Naive thymus-derived CD4-positive, alpha-beta T cell (primary cell): ENCODE measurements at regions of chr18 and their contacts with region 1.

Region 1: GRCh38 chr18:59907172-59907571 is 7.4 kb downstream of the PMAIP1 start:
- DNase-seq: no peak
- ATAC-seq: no peak
- H3K4me3 ChIP-seq: no peak overlapping the region
- H3K4me3 Mint-ChIP-seq: peak overlapping the region in 2 of 10 donors; percentile 4 to 66
- H3K27ac ChIP-seq: no peak overlapping the region
- H3K27ac Mint-ChIP-seq: peak overlapping the region in 5 of 9 donors; percentile 23 to 74 (median 60)
- H3K4me1 ChIP-seq: peaks cover 15% of the 10 kb centered on the region in 2 donors
- H3K4me1 Mint-ChIP-seq: peaks cover 28 to 57% (median 47%) of the 10 kb centered on the region in 7 donors
- H3K27me3 ChIP-seq: no peaks in the 10 kb centered on the region
- H3K27me3 Mint-ChIP-seq: no peaks in the 10 kb centered on the region

Region 2: DNA sequence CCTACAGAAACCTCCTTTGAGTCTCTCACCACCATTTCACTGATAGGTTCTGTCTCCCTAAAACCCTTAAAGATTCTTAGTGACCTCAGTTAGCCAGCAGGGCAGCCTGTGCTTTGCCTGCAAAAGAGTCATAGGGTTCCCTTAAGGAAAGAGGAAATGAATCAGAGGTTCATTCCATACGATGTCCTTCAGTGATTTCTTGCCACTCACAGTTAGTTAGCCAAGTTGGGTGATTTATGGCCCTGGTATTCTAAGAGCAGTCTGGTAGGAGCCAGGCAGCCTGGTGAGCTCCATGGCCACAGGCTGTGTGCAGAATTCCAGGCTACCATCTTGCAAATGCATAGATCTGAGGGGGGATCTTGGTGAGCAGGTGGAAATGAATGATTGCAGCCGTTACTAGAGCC is 191.2 kb before region 1 on chr18:
- CTCF ChIA-PET with region 1: no interaction called
- POLR2A ChIA-PET with region 1: no interaction called
- intact Hi-C with region 1: no loop called
- DNase-seq: no peak
- ATAC-seq: no peak
- H3K4me3 ChIP-seq: no peak overlapping the region
- H3K4me3 Mint-ChIP-seq: no peak overlapping the region
- H3K27ac ChIP-seq: no peak overlapping the region
- H3K27ac Mint-ChIP-seq: peak overlapping the region in 1 of 9 donors; percentile 49
- H3K4me1 ChIP-seq: no peaks in the 10 kb centered on the region
- H3K4me1 Mint-ChIP-seq: no peaks in the 10 kb centered on the region
- H3K27me3 ChIP-seq: no peaks in the 10 kb centered on the region
- H3K27me3 Mint-ChIP-seq: peaks cover 0 to 8% (median 4%) of the 10 kb centered on the region in 5 donors

Region 3: DNA sequence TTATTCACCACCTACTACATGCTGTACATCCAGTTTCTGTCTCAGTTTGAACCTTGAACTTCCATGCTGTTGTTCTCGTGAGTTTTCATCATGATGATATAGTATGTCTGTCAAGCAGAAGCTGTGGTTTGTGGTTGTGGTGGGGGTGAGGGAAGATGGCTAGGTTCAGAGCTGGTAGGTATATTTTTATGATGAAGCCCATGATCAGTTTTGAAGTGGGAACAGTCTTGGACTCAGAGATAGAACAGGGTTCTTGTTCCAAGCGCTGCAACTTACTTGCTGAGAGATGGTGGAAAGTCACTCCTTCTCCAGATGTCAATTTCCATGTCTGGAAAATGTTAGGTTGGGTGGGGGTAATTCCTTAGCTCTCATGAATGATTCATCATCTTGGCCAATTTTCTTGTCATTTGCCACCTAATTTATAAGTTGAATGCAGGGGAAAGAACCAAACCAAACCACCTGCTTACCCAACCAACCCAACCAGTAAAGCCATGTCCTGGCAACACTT is 14.3 kb after region 1 on chr18:
- CTCF ChIA-PET with region 1: no interaction called
- POLR2A ChIA-PET with region 1: interaction called, 3 read pairs
- intact Hi-C with region 1: loop called in 1 of 2 experiments (anchors 1 kb)
- DNase-seq: peak in 1 of 9 donors; percentile 49
- ATAC-seq: peak; percentile 67
- H3K4me3 ChIP-seq: no peak overlapping the region
- H3K4me3 Mint-ChIP-seq: peak overlapping the region in 1 of 10 donors; percentile 67
- H3K27ac ChIP-seq: no peak overlapping the region
- H3K27ac Mint-ChIP-seq: peak overlapping the region in 2 of 9 donors; percentile 10 to 84
- H3K4me1 ChIP-seq: no peaks in the 10 kb centered on the region
- H3K4me1 Mint-ChIP-seq: peaks cover 4 to 46% (median 16%) of the 10 kb centered on the region in 7 donors
- H3K27me3 ChIP-seq: no peaks in the 10 kb centered on the region
- H3K27me3 Mint-ChIP-seq: peaks cover 0 to 8% (median 5%) of the 10 kb centered on the region in 5 donors

Region 4: DNA sequence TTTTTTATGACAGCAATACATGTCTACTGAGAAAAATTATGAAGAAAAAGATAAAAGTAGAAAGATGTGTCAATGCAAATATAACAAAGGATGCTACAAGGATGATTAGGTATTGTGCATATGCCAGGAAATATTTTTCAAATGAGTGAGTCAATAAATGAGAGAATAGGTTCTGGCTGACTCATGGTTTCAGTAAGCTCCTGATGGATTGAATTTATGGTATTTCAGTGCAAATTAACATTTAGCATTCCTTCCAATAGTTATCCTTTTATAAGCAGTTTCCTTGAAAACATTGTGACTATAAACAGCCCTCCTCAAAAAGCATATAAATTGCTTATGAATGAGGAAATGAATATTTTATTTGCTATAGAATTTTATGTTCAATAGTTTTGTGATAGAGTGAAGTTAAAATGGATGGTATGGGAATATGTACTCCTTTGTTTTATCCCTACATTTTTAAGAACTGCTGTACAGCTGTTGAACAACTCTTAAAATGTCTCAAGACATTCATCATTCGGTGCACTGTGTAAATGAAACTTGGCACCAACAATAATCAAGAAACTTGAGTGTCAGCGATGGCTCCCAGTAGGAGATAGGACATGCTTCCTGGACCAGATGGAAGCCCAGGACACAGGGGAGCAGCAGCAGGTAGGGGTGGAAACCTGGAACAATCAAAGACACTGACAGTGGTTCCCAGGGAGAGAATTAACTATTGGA is 137.3 kb after region 1 on chr18:
- CTCF ChIA-PET with region 1: no interaction called
- POLR2A ChIA-PET with region 1: no interaction called
- intact Hi-C with region 1: no loop called
- DNase-seq: no peak
- ATAC-seq: no peak
- H3K4me3 ChIP-seq: no peak overlapping the region
- H3K4me3 Mint-ChIP-seq: no peak overlapping the region
- H3K27ac ChIP-seq: no peak overlapping the region
- H3K27ac Mint-ChIP-seq: peak overlapping the region in 1 of 9 donors; percentile 33
- H3K4me1 ChIP-seq: no peaks in the 10 kb centered on the region
- H3K4me1 Mint-ChIP-seq: no peaks in the 10 kb centered on the region
- H3K27me3 ChIP-seq: no peaks in the 10 kb centered on the region
- H3K27me3 Mint-ChIP-seq: peaks cover 2 to 13% (median 7%) of the 10 kb centered on the region in 5 donors